B cell (primary cell): ENCODE measurements at regions of chr11 and their contacts with region 1.

Region 1: GRCh38 chr11:123560006-123560405 is 94.4 kb downstream of the SCN3B start:
- DNase-seq: peak; percentile 54
- ATAC-seq: peak; percentile 82
- H3K4me3 ChIP-seq: peak overlapping the region in 3 of 5 experiments; percentile 17 to 46 (median 33)
- H3K4me3 Mint-ChIP-seq: peak overlapping the region; percentile 96
- H3K27ac ChIP-seq: no peak overlapping the region
- H3K27ac Mint-ChIP-seq: peak overlapping the region; percentile 88
- H3K4me1 ChIP-seq: peaks cover 12 to 19% of the 10 kb centered on the region in 2 donors
- H3K4me1 Mint-ChIP-seq: peaks cover 21% of the 10 kb centered on the region
- H3K27me3 ChIP-seq: no peaks in the 10 kb centered on the region
- H3K27me3 Mint-ChIP-seq: no peaks in the 10 kb centered on the region
- CTCF ChIP-seq: no peak

Region 2: DNA sequence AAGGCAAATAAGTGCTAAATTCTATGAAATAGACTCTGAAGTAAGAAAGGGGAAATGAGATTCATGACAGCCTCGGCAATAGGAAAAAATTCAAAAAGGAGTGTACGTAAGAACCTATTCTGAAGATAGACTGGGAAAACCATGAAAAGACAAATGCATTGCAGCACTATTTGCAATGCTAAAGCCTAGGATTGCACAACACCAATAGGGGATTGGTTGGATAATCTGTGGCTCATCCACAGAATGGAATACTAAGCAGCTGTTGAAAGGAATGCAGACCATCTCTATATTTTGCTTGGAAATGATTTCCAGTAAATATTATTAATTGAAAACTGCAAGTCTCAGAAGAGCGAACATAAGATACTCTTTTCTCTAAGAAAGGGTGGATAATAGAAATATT is 273.2 kb before region 1 on chr11:
- CTCF ChIA-PET with region 1: no interaction called
- POLR2A ChIA-PET with region 1: interaction called, 11 read pairs
- intact Hi-C with region 1: no loop called
- DNase-seq: no peak
- ATAC-seq: no peak
- H3K4me3 ChIP-seq: no peak overlapping the region
- H3K4me3 Mint-ChIP-seq: no peak overlapping the region
- H3K27ac ChIP-seq: no peak overlapping the region
- H3K27ac Mint-ChIP-seq: no peak overlapping the region
- H3K4me1 ChIP-seq: no peaks in the 10 kb centered on the region
- H3K4me1 Mint-ChIP-seq: no peaks in the 10 kb centered on the region
- H3K27me3 ChIP-seq: peaks cover 0 to 3% (median under 1%) of the 10 kb centered on the region in 4 experiments
- H3K27me3 Mint-ChIP-seq: peaks cover 31% of the 10 kb centered on the region
- CTCF ChIP-seq: no peak

Region 3: DNA sequence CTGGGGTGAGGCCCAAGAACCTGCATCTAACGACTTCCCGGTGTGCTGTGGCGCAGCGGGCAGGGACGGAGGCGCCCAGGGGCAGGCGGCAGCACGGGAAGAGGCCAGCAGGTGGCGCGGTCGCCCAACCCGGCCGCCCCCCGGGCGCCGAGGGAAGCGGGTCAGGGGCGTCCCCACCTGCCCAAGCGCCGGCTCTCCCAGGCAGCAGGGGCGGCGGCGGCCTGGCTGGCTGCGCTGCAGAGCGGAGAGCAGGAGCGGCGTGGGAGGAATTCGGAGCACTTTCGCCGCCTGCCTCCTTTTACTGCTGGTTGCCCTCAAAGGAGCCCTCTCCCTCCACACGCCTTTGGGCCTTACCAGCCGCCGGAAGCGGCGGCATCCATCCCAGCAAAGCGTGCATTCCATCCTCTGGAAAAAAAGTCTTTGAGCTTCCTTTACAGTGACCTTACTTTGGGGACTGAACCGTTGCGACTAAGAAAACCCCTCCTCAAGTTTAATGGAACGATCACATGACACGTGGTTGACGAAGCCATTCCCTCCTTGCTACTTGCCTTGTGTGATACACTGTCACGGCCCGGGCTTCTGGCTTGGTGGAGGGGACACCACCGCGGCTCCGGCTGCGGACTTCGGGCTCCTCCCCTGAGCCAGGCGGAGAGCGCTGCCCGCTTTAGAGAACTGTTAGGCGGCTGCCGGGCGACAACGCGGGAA is 258.2 kb before region 1 on chr11:
- CTCF ChIA-PET with region 1: no interaction called
- POLR2A ChIA-PET with region 1: no interaction called
- intact Hi-C with region 1: loop called (anchors 2 kb)
- DNase-seq: peak; percentile 63
- ATAC-seq: peak; percentile 77
- H3K4me3 ChIP-seq: peak overlapping the region; percentile 24 to 45 (median 39)
- H3K4me3 Mint-ChIP-seq: peak overlapping the region; percentile 71
- H3K27ac ChIP-seq: no peak overlapping the region
- H3K27ac Mint-ChIP-seq: peak overlapping the region; percentile 39
- H3K4me1 ChIP-seq: peaks cover 14 to 25% of the 10 kb centered on the region in 2 donors
- H3K4me1 Mint-ChIP-seq: peaks cover 28% of the 10 kb centered on the region
- H3K27me3 ChIP-seq: peaks cover 0 to 12% (median 5%) of the 10 kb centered on the region in 4 experiments
- H3K27me3 Mint-ChIP-seq: peaks cover 6% of the 10 kb centered on the region
- CTCF ChIP-seq: peak; percentile 86

Region 4: GRCh38 chr11:123511037-123511870 is 48.8 kb before region 1 on chr11:
- CTCF ChIA-PET with region 1: interaction called, 11 read pairs
- POLR2A ChIA-PET with region 1: interaction called, 3 read pairs
- intact Hi-C with region 1: loop called (anchors 1 kb)
- DNase-seq: peak; percentile 66
- ATAC-seq: peak; percentile 99
- H3K4me3 ChIP-seq: no peak overlapping the region
- H3K4me3 Mint-ChIP-seq: peak overlapping the region; percentile 42
- H3K27ac ChIP-seq: no peak overlapping the region
- H3K27ac Mint-ChIP-seq: no peak overlapping the region
- H3K4me1 ChIP-seq: peaks cover 3% of the 10 kb centered on the region in 2 donors
- H3K4me1 Mint-ChIP-seq: peaks cover 8% of the 10 kb centered on the region
- H3K27me3 ChIP-seq: no peaks in the 10 kb centered on the region
- H3K27me3 Mint-ChIP-seq: no peaks in the 10 kb centered on the region
- CTCF ChIP-seq: peak; percentile 86

Region 5: DNA sequence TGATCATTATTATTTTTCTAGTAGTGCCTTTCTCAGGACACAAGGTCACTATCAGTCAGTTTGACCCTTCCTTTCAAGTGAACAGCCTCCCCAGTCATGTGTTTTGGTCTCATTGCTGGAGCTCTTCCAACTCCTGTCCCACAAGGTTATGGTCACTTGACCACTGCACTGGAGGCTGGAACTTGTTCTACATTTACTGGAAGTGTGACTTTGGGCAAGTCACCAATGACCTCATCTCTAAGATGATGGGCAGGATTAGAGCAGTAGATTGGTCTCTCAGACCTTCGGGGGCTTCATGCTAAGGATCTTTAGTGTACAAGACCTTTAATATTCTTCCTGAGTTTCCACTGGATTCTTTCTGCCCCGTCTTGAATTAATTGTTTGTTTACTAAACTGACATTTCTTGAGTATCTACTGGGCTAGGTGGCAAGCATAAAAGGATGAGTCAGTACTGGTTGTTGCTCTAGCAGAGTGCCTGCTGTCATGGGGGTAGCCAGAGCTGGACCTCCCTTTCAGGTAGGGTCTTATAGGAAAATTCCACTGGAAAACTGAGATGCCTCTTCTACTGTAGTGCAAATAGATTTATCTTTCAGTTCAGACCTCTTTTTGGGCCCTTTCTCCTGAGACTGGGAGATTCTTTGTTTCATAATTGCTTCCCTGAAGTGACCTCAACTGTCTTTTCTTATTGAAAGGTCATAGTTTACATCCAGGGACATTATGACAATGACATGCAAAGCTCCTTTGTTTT is 23.1 kb before region 1 on chr11:
- CTCF ChIA-PET with region 1: no interaction called
- POLR2A ChIA-PET with region 1: no interaction called
- intact Hi-C with region 1: no loop called
- DNase-seq: no peak
- ATAC-seq: no peak
- H3K4me3 ChIP-seq: no peak overlapping the region
- H3K4me3 Mint-ChIP-seq: no peak overlapping the region
- H3K27ac ChIP-seq: no peak overlapping the region
- H3K27ac Mint-ChIP-seq: no peak overlapping the region
- H3K4me1 ChIP-seq: no peaks in the 10 kb centered on the region
- H3K4me1 Mint-ChIP-seq: peaks cover 5% of the 10 kb centered on the region
- H3K27me3 ChIP-seq: no peaks in the 10 kb centered on the region
- H3K27me3 Mint-ChIP-seq: no peaks in the 10 kb centered on the region
- CTCF ChIP-seq: no peak

Region 6: GRCh38 chr11:123640677-123641494 is 80.9 kb after region 1 on chr11:
- CTCF ChIA-PET with region 1: no interaction called
- POLR2A ChIA-PET with region 1: no interaction called
- intact Hi-C with region 1: no loop called
- DNase-seq: peak; percentile 57
- ATAC-seq: peak; percentile 33
- H3K4me3 ChIP-seq: no peak overlapping the region
- H3K4me3 Mint-ChIP-seq: no peak overlapping the region
- H3K27ac ChIP-seq: no peak overlapping the region
- H3K27ac Mint-ChIP-seq: no peak overlapping the region
- H3K4me1 ChIP-seq: peaks cover 0 to 6% of the 10 kb centered on the region in 2 donors
- H3K4me1 Mint-ChIP-seq: peaks cover 3% of the 10 kb centered on the region
- H3K27me3 ChIP-seq: peaks cover 0 to 7% (median 3%) of the 10 kb centered on the region in 4 experiments
- H3K27me3 Mint-ChIP-seq: peaks cover 34% of the 10 kb centered on the region
- CTCF ChIP-seq: peak; percentile 82